Adrenal gland (tissue), 19 donors: ENCODE measurements at regions of chr15 and their contacts with region 1.

Region 1: DNA sequence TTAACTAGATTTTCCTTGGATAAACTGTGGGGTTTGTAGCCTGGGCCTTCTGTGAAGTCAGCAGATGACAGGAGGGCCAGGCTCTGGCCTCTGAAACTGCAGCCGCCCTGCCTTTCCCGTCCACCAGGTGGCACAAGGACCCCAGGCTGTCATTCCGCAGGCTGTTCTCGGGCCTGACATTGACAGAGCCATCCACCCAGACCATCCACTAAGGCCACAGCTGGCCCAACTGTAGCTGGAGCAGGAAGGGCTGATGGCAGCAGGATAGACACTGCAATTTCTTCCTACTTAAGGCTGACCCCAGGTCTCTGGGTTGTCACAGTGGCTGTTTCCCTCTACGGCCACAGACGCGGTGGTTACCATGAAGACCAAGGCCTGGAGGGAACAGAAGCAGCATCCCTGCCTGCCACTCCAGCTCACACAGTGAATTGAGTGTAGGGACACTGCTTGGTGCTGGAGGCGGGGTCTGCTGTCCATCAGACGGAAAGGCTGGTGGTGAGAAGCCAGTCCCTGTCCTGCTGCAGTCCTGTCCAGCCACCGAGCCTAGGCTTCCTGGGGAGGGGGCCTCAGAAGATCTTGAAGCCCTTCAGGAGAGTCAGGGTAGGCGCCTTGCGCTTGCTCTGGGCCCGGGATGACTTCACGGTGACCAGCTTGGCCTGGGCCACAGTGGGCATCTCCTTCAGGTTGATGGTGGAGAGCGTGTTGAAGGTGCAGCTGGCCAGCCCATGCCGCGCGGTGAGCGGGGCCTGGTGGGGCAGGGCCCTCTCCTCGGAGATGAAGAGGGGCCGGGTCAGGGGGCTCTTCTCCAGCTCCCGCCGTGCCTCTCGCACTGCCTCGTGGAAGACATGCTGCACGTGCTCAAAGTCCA is 9.4 kb downstream of the SLC51B start:
- DNase-seq: peak; percentile 69 to 92 (median 85)
- H3K4me3 ChIP-seq: no peak overlapping the region
- H3K27ac ChIP-seq: peak overlapping the region in 2 of 5 donors; percentile 30 to 32
- H3K4me1 ChIP-seq: peaks cover 0 to 5% of the 10 kb centered on the region in 2 donors
- H3K27me3 ChIP-seq: no peaks in the 10 kb centered on the region
- CTCF ChIP-seq: peak; percentile 83 to 97 (median 94)
- POLR2A ChIP-seq: no peak

Region 2: GRCh38 chr15:65101411-65101890 is 46.9 kb after region 1 on chr15:
- intact Hi-C with region 1: loop called (anchors 10 kb)
- DNase-seq: peak; percentile 61 to 86 (median 69)
- H3K4me3 ChIP-seq: no peak overlapping the region
- H3K27ac ChIP-seq: no peak overlapping the region
- H3K4me1 ChIP-seq: no peaks in the 10 kb centered on the region
- H3K27me3 ChIP-seq: no peaks in the 10 kb centered on the region
- CTCF ChIP-seq: peak; percentile 65 to 71 (median 69)
- POLR2A ChIP-seq: no peak